Kidney (tissue), 22 donors: ENCODE measurements at regions of chr5 and their contacts with region 1.

Region 1: DNA sequence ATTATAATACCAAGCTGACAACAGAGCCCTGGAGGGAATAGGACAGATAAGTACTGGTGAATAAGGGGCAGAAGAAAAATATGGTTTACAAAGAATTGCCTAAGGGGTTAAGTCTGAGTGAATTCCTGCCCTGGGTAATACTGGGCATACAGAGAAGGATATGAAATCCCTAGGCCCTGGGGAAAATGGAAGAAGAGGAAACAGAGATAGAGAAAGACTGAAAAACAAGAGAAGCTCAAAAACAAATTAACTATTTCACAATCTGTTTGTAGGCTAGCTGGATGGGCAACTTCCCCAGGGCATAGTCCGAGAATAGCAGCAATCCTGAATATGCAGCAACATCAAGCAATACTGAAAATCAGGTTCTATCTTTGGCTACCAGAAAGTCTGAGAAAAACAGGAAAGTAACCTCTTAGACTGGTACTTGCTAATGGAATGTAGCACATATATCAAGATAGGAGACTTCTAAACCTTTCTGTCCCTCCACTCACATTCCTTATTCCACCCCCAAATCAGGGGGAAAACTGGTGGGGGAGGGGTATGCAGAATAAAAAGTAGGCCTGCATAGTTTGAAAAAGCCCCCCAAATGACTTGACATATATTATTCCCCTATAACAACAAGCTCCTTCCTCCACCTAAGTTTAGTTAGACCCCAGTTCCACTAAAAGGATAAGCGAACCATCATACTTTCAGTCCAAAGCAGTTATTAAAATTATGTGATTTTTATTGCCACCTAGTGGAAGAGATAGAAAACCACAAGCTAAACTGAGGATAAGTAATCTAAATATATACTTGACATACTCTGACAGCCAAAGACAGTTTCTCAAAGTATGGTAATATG is 20.6 kb downstream of the SLC38A9 start:
- DNase-seq: peak in 2 of 5 donors; percentile 51 to 79
- H3K4me3 ChIP-seq: peak overlapping the region in 2 of 3 donors; percentile 18 to 41
- H3K27ac ChIP-seq: no peak overlapping the region
- H3K4me1 ChIP-seq: peaks cover 4 to 7% (median 4%) of the 10 kb centered on the region in 3 donors
- H3K27me3 ChIP-seq: no peaks in the 10 kb centered on the region
- CTCF ChIP-seq: peak; percentile 67

Region 2: GRCh38 chr5:55324815-55325418 is 366.6 kb before region 1 on chr5:
- intact Hi-C with region 1: loop called (anchors 10 kb)
- DNase-seq: peak in 2 of 5 donors; percentile 30 to 67
- H3K4me3 ChIP-seq: no peak overlapping the region
- H3K27ac ChIP-seq: no peak overlapping the region
- H3K4me1 ChIP-seq: no peaks in the 10 kb centered on the region
- H3K27me3 ChIP-seq: no peaks in the 10 kb centered on the region
- CTCF ChIP-seq: peak; percentile 62

Region 3: GRCh38 chr5:55344392-55344992 is 347.0 kb before region 1 on chr5:
- intact Hi-C with region 1: no loop called
- DNase-seq: peak in 4 of 5 donors; percentile 49 to 71 (median 60)
- H3K4me3 ChIP-seq: no peak overlapping the region
- H3K27ac ChIP-seq: no peak overlapping the region
- H3K4me1 ChIP-seq: no peaks in the 10 kb centered on the region
- H3K27me3 ChIP-seq: no peaks in the 10 kb centered on the region
- CTCF ChIP-seq: peak; percentile 90